CD4-positive, alpha-beta memory T cell (primary cell): ENCODE measurements at regions of chr16 and their contacts with region 1.

Region 1: DNA sequence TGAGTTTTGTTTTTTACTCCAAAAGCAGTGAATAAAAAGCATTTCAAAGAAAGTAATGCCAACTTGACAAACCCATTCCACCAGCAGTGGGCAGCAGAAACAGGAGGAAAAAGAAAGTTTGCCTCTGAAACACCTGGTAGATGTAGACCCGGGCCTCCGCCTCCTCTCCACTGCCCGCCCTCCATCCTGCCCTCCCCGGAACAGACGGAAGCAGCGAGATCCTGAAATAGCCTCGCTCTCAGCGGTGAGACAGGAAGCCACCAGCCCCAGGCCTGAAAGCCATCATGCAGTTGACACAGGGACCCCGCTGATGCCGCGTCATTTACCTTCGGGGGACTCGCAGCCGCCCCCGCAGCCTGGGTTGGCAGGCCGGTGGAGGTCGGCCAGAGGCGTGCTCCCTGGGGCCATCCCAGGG is 67.8 kb downstream of the C16orf78 start:
- DNase-seq: peak; percentile 72 to 77 (median 74)
- H3K4me3 ChIP-seq: peak overlapping the region in 1 of 2 donors; percentile 40
- H3K4me3 Mint-ChIP-seq: peak overlapping the region; percentile 59 to 83 (median 68)
- H3K27ac ChIP-seq: no peak overlapping the region
- H3K27ac Mint-ChIP-seq: peak overlapping the region; percentile 53 to 88 (median 69)
- H3K4me1 ChIP-seq: peaks cover 19% of the 10 kb centered on the region
- H3K4me1 Mint-ChIP-seq: peaks cover 11 to 31% (median 18%) of the 10 kb centered on the region in 4 donors
- H3K27me3 ChIP-seq: no peaks in the 10 kb centered on the region
- H3K27me3 Mint-ChIP-seq: no peaks in the 10 kb centered on the region

Region 2: GRCh38 chr16:49463529-49463928 is 22.2 kb after region 1 on chr16:
- CTCF ChIA-PET with region 1: no interaction called
- POLR2A ChIA-PET with region 1: no interaction called
- intact Hi-C with region 1: loop called (anchors 1 kb)
- DNase-seq: peak; percentile 79 to 88 (median 84)
- H3K4me3 ChIP-seq: no peak overlapping the region
- H3K4me3 Mint-ChIP-seq: peak overlapping the region; percentile 39 to 80 (median 72)
- H3K27ac ChIP-seq: peak overlapping the region; percentile 10
- H3K27ac Mint-ChIP-seq: peak overlapping the region; percentile 74 to 98 (median 93)
- H3K4me1 ChIP-seq: peaks cover 29% of the 10 kb centered on the region
- H3K4me1 Mint-ChIP-seq: peaks cover 24 to 54% (median 32%) of the 10 kb centered on the region in 4 donors
- H3K27me3 ChIP-seq: no peaks in the 10 kb centered on the region
- H3K27me3 Mint-ChIP-seq: no peaks in the 10 kb centered on the region

Region 3: GRCh38 chr16:49491771-49492761 is 50.7 kb after region 1 on chr16:
- CTCF ChIA-PET with region 1: no interaction called
- POLR2A ChIA-PET with region 1: no interaction called
- intact Hi-C with region 1: loop called (anchors 1 kb)
- DNase-seq: peak in 4 of 5 donors; percentile 10 to 27 (median 16)
- H3K4me3 ChIP-seq: no peak overlapping the region
- H3K4me3 Mint-ChIP-seq: no peak overlapping the region
- H3K27ac ChIP-seq: no peak overlapping the region
- H3K27ac Mint-ChIP-seq: no peak overlapping the region
- H3K4me1 ChIP-seq: peaks cover 9% of the 10 kb centered on the region
- H3K4me1 Mint-ChIP-seq: peaks cover 0 to 4% (median 2%) of the 10 kb centered on the region in 4 donors
- H3K27me3 ChIP-seq: no peaks in the 10 kb centered on the region
- H3K27me3 Mint-ChIP-seq: peaks cover 4% of the 10 kb centered on the region in 2 donors

Region 4: DNA sequence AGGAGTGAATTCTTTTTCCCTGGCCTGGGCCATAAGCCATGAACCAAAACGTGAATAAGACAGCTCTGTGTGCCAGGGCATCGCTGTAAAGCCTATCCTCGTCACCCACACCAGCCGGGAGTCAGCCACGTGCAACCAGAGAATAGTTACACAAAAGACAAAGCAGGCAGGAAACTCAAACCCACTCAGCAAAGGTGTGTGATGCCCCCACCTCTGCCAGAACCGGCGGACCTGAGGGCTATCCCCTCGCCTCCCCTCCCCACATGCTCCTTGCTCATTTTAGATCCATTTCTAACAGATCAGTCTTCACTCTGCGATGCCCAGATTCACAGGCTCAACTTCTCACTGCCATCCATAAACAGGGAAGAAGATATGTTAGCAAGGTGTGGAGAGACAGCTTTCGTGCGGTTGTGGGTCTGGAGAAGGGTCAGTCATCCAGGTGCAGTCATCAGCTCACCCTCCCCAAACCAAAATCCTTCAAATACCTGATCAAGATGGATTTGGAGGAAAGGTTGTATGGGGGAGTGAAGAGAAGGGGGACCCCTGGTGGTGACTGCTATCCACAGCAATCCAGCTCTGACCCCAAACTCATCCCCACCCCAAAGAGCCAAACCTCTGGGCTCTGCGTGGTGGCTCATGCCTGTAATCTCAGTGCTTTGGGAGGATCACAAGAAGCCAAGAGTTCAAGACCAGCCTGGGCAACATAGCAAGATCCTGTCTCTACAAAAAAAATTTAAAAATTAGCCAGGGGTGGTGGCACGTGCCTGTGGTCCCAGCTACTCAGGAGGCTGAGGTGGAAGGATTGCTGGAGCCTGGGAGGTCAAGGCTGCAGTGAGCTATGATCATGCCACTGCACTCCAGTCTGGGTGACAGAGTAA is 151.4 kb after region 1 on chr16:
- CTCF ChIA-PET with region 1: interaction called, 8 read pairs
- POLR2A ChIA-PET with region 1: no interaction called
- intact Hi-C with region 1: loop called (anchors 1 kb)
- DNase-seq: peak in 4 of 5 donors; percentile 26 to 34 (median 32)
- H3K4me3 ChIP-seq: no peak overlapping the region
- H3K4me3 Mint-ChIP-seq: no peak overlapping the region
- H3K27ac ChIP-seq: no peak overlapping the region
- H3K27ac Mint-ChIP-seq: no peak overlapping the region
- H3K4me1 ChIP-seq: no peaks in the 10 kb centered on the region
- H3K4me1 Mint-ChIP-seq: peaks cover 0 to 4% (median 1%) of the 10 kb centered on the region in 4 donors
- H3K27me3 ChIP-seq: no peaks in the 10 kb centered on the region
- H3K27me3 Mint-ChIP-seq: peaks cover 9 to 15% of the 10 kb centered on the region in 2 donors

Region 5: GRCh38 chr16:49855280-49855821 is 414.0 kb after region 1 on chr16:
- CTCF ChIA-PET with region 1: no interaction called
- POLR2A ChIA-PET with region 1: no interaction called
- intact Hi-C with region 1: loop called (anchors 10 kb)
- DNase-seq: peak; percentile 45 to 55 (median 47)
- H3K4me3 ChIP-seq: no peak overlapping the region
- H3K4me3 Mint-ChIP-seq: peak overlapping the region in 6 of 8 donors; percentile 20 to 76 (median 38)
- H3K27ac ChIP-seq: no peak overlapping the region
- H3K27ac Mint-ChIP-seq: no peak overlapping the region
- H3K4me1 ChIP-seq: peaks cover 10% of the 10 kb centered on the region
- H3K4me1 Mint-ChIP-seq: peaks cover 3 to 32% (median 9%) of the 10 kb centered on the region in 4 donors
- H3K27me3 ChIP-seq: peaks cover 26% of the 10 kb centered on the region
- H3K27me3 Mint-ChIP-seq: peaks cover 28 to 35% of the 10 kb centered on the region in 2 donors